CD4-positive, alpha-beta T cell (primary cell): ENCODE measurements at regions of chr1 and their contacts with region 1.

Region 1: DNA sequence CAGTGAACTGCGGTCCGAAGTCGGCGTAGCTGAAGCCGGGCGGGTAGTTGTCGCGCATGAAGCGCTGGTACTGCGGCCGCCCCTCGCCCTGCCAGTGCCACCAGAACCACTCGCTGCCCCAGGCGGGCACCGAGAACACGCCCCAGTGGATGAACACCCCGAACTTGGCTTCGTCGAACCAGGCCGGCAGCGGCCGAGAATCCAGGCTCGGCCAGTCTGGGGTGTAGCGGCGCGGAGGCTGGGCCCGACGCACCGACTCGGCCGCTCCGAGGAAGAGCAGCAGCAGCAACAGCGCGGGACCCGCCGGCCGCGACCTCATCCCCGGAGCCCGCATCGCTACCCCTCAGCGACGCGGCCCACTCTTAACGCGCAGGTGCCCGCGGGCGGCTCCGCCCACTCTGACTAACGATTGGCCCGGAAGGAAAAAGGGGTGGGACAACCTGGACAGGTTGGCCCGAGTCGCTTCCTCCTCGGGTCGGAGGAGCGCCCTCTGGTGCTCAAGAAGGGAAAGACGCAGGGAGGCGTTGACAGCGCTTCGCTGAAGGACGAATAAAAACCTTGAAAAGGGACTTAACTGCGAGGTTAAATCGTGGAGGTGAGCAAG is at the start of gene FUCA1:
- DNase-seq: peak; percentile 90 to 99 (median 95)
- ATAC-seq: peak; percentile 99
- H3K4me3 ChIP-seq: peak within 1 kb of the TSS; percentile 86
- H3K4me3 Mint-ChIP-seq: peak within 1 kb of the TSS; percentile 87
- H3K27ac ChIP-seq: peak within 1 kb of the TSS; percentile 29 to 41
- H3K27ac Mint-ChIP-seq: peak within 1 kb of the TSS; percentile 81
- H3K4me1 ChIP-seq: peaks cover 29% of the 10 kb centered on the region
- H3K4me1 Mint-ChIP-seq: peaks cover 29% of the 10 kb centered on the region
- H3K27me3 ChIP-seq: no peaks in the 10 kb centered on the region
- H3K27me3 Mint-ChIP-seq: no peaks in the 10 kb centered on the region
- CTCF ChIP-seq: peak; percentile 96
- total RNA-seq, gene FUCA1: 3.6 to 4.1 TPM

Region 2: GRCh38 chr1:23691499-23692307 is 176.4 kb before region 1 on chr1 and contains the start of gene RPL11:
- CTCF ChIA-PET with region 1: no interaction called
- POLR2A ChIA-PET with region 1: no interaction called
- intact Hi-C with region 1: loop called in 1 of 2 experiments (anchors 5 kb)
- DNase-seq: peak; percentile 78 to 95 (median 85)
- ATAC-seq: peak; percentile 99
- H3K4me3 ChIP-seq: peak within 1 kb of the TSS; percentile 97
- H3K4me3 Mint-ChIP-seq: peak within 1 kb of the TSS; percentile 99
- H3K27ac ChIP-seq: peak within 1 kb of the TSS; percentile 55 to 87
- H3K27ac Mint-ChIP-seq: peak within 1 kb of the TSS; percentile 95
- H3K4me1 ChIP-seq: peaks cover 40% of the 10 kb centered on the region
- H3K4me1 Mint-ChIP-seq: peaks cover 47% of the 10 kb centered on the region
- H3K27me3 ChIP-seq: no peaks in the 10 kb centered on the region
- H3K27me3 Mint-ChIP-seq: no peaks in the 10 kb centered on the region
- CTCF ChIP-seq: peak; percentile 67
- total RNA-seq, gene RPL11: 2,191 to 2,374 TPM

Region 3: DNA sequence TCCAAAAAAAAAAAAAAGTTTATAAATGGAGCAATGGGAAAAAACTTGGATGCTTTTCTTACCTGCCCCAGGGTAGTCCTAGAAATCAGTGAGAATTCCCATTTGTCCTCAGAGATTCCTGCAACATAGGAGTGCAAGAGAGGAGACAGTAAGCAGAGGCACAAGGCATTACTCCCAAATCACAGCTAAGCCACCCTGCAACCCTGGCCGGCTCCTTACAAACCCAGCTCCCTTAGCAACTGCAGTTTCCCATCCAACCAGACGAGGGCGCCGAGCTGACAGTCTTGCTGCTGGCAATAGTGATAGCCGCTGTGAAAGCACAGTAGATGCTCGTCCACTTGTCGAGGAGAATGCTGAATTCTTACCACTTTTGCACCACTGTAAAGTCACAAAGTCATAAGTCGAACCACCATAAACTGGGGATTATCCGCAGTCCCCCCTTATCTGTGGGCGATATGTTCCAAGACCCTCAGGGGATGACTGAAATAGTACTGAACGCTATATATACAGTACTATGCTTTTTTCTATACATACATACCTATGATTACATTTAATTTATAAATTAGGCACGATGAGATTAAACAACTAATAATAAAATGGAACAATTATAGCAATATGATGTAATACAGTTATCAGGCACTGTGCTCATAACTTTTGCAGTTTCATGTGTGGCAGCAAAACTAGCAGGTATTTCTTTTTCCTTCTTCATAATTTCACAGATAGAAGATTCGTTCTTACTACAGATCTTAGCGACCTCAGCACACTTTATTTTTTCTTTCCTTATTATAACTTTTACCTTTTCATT is 95.8 kb before region 1 on chr1:
- CTCF ChIA-PET with region 1: interaction called, 4 read pairs
- POLR2A ChIA-PET with region 1: no interaction called
- intact Hi-C with region 1: loop called (anchors 1 kb)
- DNase-seq: peak; percentile 75 to 89 (median 82)
- ATAC-seq: peak; percentile 97
- H3K4me3 ChIP-seq: no peak overlapping the region
- H3K4me3 Mint-ChIP-seq: peak overlapping the region; percentile 34
- H3K27ac ChIP-seq: no peak overlapping the region
- H3K27ac Mint-ChIP-seq: peak overlapping the region; percentile 15
- H3K4me1 ChIP-seq: peaks cover 6% of the 10 kb centered on the region
- H3K4me1 Mint-ChIP-seq: peaks cover 21% of the 10 kb centered on the region
- H3K27me3 ChIP-seq: no peaks in the 10 kb centered on the region
- H3K27me3 Mint-ChIP-seq: no peaks in the 10 kb centered on the region
- CTCF ChIP-seq: peak; percentile 95

Region 4: DNA sequence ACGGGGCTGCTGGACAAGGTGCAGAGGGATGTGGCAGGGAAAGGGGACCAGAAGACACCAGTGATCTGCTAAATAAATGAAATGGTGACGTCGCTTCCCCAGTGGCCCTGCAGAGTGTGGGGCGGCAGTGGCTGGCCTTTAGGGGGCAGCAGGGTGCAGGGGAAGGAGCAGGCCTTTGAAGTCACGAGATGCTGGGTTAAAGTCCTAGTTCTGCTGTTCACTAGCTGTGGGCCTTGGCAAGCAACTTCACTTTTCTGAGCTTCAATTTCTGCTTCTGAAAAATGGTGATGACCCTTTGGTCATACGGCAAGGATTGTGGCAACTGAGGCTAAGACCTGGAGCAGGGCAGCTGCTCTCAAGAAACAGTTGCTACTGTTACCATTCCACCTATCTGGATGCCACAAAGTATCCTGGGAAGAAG is 58.3 kb before region 1 on chr1:
- CTCF ChIA-PET with region 1: interaction called, 11 read pairs
- POLR2A ChIA-PET with region 1: interaction called, 8 read pairs
- intact Hi-C with region 1: loop called (anchors 1 kb)
- DNase-seq: peak; percentile 73 to 91 (median 78)
- ATAC-seq: peak; percentile 94
- H3K4me3 ChIP-seq: no peak overlapping the region
- H3K4me3 Mint-ChIP-seq: no peak overlapping the region
- H3K27ac ChIP-seq: no peak overlapping the region
- H3K27ac Mint-ChIP-seq: no peak overlapping the region
- H3K4me1 ChIP-seq: peaks cover 16% of the 10 kb centered on the region
- H3K4me1 Mint-ChIP-seq: peaks cover 14% of the 10 kb centered on the region
- H3K27me3 ChIP-seq: no peaks in the 10 kb centered on the region
- H3K27me3 Mint-ChIP-seq: no peaks in the 10 kb centered on the region
- CTCF ChIP-seq: peak; percentile 68

Region 5: DNA sequence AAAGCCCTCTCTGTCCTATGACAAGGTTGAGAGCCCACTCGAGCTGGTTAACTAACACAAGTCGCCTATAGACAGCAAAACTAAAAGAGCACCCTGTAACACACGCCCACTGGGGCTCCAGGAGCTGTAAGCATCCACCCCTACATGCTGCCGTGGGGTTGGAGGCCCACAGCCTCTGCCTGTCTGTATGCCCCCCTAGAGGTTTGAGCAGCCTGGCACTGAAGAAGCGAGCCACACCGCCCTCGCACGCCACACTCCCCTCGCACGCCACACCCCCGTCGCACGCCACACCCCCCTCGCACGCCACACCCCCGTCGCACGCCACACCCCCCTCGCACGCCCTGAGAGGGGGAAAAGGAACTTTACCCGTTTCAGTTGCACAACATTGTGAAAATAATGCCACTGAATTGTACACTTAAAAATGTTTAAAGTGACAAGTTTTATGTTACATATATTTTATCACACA is 29.6 kb before region 1 on chr1:
- CTCF ChIA-PET with region 1: no interaction called
- POLR2A ChIA-PET with region 1: no interaction called
- intact Hi-C with region 1: loop called in 1 of 2 experiments (anchors 1 kb)
- DNase-seq: peak; percentile 63 to 89 (median 70)
- ATAC-seq: peak; percentile 99
- H3K4me3 ChIP-seq: peak overlapping the region; percentile 38
- H3K4me3 Mint-ChIP-seq: peak overlapping the region; percentile 65
- H3K27ac ChIP-seq: no peak overlapping the region
- H3K27ac Mint-ChIP-seq: no peak overlapping the region
- H3K4me1 ChIP-seq: peaks cover 10% of the 10 kb centered on the region
- H3K4me1 Mint-ChIP-seq: peaks cover 12% of the 10 kb centered on the region
- H3K27me3 ChIP-seq: no peaks in the 10 kb centered on the region
- H3K27me3 Mint-ChIP-seq: peaks cover 11% of the 10 kb centered on the region
- CTCF ChIP-seq: no peak

Region 6: DNA sequence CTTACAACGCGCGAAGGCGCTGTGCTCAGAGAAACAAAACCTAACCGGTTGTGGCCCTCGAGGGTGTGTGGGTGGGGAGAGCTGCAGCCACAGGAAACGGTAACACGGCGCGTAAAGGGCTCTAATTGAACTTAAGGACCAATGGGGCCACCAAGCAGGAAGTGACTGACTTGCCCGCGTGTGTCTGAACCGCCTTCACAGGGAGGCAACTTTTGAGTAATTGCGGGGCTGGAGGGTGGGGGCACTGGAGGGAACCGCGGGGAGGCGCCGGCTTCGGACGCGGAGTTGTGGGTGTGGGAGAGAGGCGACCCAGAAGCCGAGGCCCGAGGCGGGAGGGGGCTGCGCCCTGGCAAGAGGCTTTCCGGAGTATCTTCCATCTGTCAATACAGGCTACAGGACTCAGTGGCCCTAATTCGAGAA is 91.0 kb after region 1 on chr1:
- CTCF ChIA-PET with region 1: no interaction called
- POLR2A ChIA-PET with region 1: no interaction called
- intact Hi-C with region 1: loop called in 1 of 2 experiments (anchors 5 kb)
- DNase-seq: peak; percentile 78 to 97 (median 84)
- ATAC-seq: peak; percentile 80
- H3K4me3 ChIP-seq: peak overlapping the region; percentile 61
- H3K4me3 Mint-ChIP-seq: peak overlapping the region; percentile 100
- H3K27ac ChIP-seq: peak overlapping the region; percentile 92 to 97
- H3K27ac Mint-ChIP-seq: peak overlapping the region; percentile 100
- H3K4me1 ChIP-seq: peaks cover 20% of the 10 kb centered on the region
- H3K4me1 Mint-ChIP-seq: peaks cover 59% of the 10 kb centered on the region
- H3K27me3 ChIP-seq: no peaks in the 10 kb centered on the region
- H3K27me3 Mint-ChIP-seq: no peaks in the 10 kb centered on the region
- CTCF ChIP-seq: no peak

Region 7: DNA sequence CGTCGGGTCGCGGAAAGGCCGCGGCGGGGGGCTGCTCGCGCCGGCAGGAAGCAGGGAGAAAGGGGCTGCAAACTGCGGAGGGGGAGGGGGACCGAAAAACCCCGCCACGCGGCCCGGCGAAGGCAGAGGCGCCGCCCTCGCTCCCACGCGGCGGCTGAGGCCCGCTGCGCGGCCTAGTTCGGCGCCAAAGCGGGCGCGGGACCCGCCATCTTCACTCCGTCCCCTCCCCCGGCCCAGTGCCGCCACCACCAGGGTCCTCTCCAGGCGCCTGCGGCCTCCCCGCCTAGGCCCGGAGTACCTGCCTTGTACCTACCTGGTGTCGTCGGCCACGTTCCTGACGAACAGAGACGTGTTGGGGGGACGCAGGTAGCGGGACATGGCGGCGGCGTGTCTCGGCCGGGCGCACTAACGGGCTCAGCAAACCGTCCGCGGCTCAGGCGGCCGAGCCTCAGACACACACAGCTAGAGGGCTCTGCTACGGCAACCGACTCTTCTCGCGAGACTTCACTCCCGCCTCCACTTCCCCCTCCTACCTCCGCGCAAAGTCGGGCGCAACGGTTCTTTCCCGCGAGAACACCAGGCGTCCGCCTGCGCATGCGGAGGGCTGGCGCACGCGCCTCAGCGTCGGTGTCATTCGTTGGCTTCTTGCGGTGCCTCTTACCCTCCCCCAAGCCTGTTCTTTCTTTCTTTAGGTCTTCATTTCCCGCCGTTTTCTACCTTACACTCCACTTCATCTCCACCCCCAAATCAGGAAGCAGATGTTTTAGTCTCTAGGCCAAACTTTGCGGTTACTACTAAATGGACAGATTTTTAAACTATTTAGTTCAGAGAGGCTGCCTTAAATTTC is 112.0 kb after region 1 on chr1 and contains the start of gene SRSF10:
- CTCF ChIA-PET with region 1: no interaction called
- POLR2A ChIA-PET with region 1: no interaction called
- intact Hi-C with region 1: loop called in 1 of 2 experiments (anchors 2 kb)
- DNase-seq: peak; percentile 93 to 100 (median 98)
- ATAC-seq: peak; percentile 95
- H3K4me3 ChIP-seq: peak within 1 kb of the TSS; percentile 92
- H3K4me3 Mint-ChIP-seq: peak within 1 kb of the TSS; percentile 99
- H3K27ac ChIP-seq: peak within 1 kb of the TSS; percentile 97 to 98
- H3K27ac Mint-ChIP-seq: peak within 1 kb of the TSS; percentile 95
- H3K4me1 ChIP-seq: peaks cover 19% of the 10 kb centered on the region
- H3K4me1 Mint-ChIP-seq: peaks cover 54% of the 10 kb centered on the region
- H3K27me3 ChIP-seq: no peaks in the 10 kb centered on the region
- H3K27me3 Mint-ChIP-seq: no peaks in the 10 kb centered on the region
- CTCF ChIP-seq: no peak
- total RNA-seq, gene SRSF10: 346 to 356 TPM